ENCODE measurements at regions of chr1 and their contacts with region 1.

Region 1: GRCh38 chr1:86515597-86515996 is 31.3 kb upstream of the CLCA4 start:
- DNase-seq: no peak
- ATAC-seq: no peak
- H3K4me3 ChIP-seq: no peak overlapping the region
- H3K4me3 Mint-ChIP-seq: no peak overlapping the region
- H3K27ac ChIP-seq: no peak overlapping the region
- H3K27ac Mint-ChIP-seq: no peak overlapping the region
- H3K4me1 ChIP-seq: no peaks in the 10 kb centered on the region
- H3K4me1 Mint-ChIP-seq: no peaks in the 10 kb centered on the region
- H3K27me3 ChIP-seq: no peaks in the 10 kb centered on the region
- H3K27me3 Mint-ChIP-seq: no peaks in the 10 kb centered on the region

Region 2: DNA sequence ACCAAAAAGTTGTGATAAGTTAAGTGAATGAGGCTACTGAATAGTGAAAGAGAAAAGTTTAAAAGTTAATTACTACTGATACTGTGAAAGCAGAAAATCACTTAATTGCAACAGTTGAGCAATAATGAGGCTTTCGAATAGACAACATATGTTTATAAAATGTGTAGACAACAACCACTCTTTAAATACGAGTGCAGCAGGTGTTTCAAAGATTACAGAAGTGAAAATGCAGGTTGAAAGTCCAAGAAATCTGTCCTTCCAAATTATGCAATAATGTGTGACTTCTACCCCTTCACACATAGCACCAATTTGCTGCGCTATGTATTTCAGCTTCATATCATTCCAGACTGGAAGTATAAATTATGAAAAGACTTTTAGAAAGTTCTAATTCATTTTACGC is 572.1 kb before region 1 on chr1:
- CTCF ChIA-PET with region 1: no interaction called
- POLR2A ChIA-PET with region 1: no interaction called
- intact Hi-C with region 1: no loop called
- DNase-seq: no peak
- ATAC-seq: no peak
- H3K4me3 ChIP-seq: no peak overlapping the region
- H3K4me3 Mint-ChIP-seq: no peak overlapping the region
- H3K27ac ChIP-seq: no peak overlapping the region
- H3K27ac Mint-ChIP-seq: no peak overlapping the region
- H3K4me1 ChIP-seq: no peaks in the 10 kb centered on the region
- H3K4me1 Mint-ChIP-seq: no peaks in the 10 kb centered on the region
- H3K27me3 ChIP-seq: no peaks in the 10 kb centered on the region
- H3K27me3 Mint-ChIP-seq: no peaks in the 10 kb centered on the region

Region 3: DNA sequence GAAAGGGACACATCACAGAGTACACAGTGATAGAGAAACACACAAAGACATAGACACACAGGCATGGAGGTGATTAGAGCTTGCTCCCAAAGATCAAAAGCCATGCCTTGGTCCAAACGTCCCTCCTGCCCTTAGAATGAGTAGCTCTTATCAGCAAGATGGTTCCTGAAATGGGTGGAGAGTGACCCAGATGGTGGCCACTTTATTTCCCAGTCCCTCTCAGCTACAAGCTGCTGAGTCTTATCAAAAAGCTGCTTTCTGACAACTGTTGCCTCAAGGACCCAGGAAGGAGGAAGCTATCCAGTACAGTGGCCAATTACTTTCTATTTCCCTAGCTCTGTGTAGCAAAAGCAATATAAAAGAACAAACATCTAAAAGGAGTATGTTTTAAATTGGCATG is 54.6 kb before region 1 on chr1:
- CTCF ChIA-PET with region 1: no interaction called
- POLR2A ChIA-PET with region 1: no interaction called
- intact Hi-C with region 1: no loop called
- DNase-seq: no peak
- ATAC-seq: no peak
- H3K4me3 ChIP-seq: no peak overlapping the region
- H3K4me3 Mint-ChIP-seq: no peak overlapping the region
- H3K27ac ChIP-seq: no peak overlapping the region
- H3K27ac Mint-ChIP-seq: no peak overlapping the region
- H3K4me1 ChIP-seq: no peaks in the 10 kb centered on the region
- H3K4me1 Mint-ChIP-seq: no peaks in the 10 kb centered on the region
- H3K27me3 ChIP-seq: no peaks in the 10 kb centered on the region
- H3K27me3 Mint-ChIP-seq: peaks cover 9 to 22% (median 10%) of the 10 kb centered on the region in 5 donors

Region 4: DNA sequence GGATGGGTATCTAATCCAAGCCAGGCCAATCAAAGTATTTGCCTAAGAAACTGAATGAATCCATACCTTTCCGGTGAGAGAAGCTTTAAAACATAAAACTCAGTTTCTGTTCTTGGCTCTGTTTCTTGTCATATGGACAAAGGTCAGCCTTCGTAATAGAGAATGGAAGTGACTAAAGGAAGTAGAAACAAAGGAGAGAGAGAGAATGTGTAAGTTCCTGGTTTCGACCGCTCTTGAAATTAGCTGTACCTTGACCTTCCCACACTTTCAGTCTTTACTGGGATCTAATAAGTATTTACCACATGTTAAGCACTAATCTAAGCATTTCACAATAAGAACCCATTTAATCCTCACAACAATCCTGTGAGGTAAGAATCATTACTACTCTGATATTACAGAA is 11.7 kb after region 1 on chr1:
- CTCF ChIA-PET with region 1: no interaction called
- POLR2A ChIA-PET with region 1: no interaction called
- intact Hi-C with region 1: no loop called
- DNase-seq: no peak
- ATAC-seq: no peak
- H3K4me3 ChIP-seq: no peak overlapping the region
- H3K4me3 Mint-ChIP-seq: no peak overlapping the region
- H3K27ac ChIP-seq: no peak overlapping the region
- H3K27ac Mint-ChIP-seq: no peak overlapping the region
- H3K4me1 ChIP-seq: no peaks in the 10 kb centered on the region
- H3K4me1 Mint-ChIP-seq: no peaks in the 10 kb centered on the region
- H3K27me3 ChIP-seq: no peaks in the 10 kb centered on the region
- H3K27me3 Mint-ChIP-seq: peaks cover 0 to 5% (median 0%) of the 10 kb centered on the region in 5 donors

Region 5: DNA sequence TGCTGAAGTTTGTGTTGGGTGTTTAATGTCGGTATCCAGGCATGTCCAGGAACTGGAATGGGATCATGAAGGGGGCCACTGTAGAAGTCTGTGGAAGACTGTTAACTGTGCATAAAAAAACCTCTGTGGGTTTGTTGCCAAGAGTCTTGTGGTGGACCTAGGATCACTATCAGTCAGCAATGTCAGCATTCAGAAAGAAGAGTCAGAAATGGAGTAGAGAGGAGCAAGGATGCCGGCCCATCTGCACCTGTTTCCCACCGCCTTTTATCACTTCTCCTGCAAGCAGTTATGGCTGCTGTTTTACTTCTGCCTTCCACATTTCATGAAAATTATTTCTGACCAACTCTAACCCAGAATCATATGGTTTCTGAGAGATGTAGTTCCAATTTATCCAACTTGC is 68.0 kb after region 1 on chr1:
- CTCF ChIA-PET with region 1: no interaction called
- POLR2A ChIA-PET with region 1: no interaction called
- intact Hi-C with region 1: no loop called
- DNase-seq: no peak
- ATAC-seq: no peak
- H3K4me3 ChIP-seq: no peak overlapping the region
- H3K4me3 Mint-ChIP-seq: no peak overlapping the region
- H3K27ac ChIP-seq: no peak overlapping the region
- H3K27ac Mint-ChIP-seq: no peak overlapping the region
- H3K4me1 ChIP-seq: no peaks in the 10 kb centered on the region
- H3K4me1 Mint-ChIP-seq: no peaks in the 10 kb centered on the region
- H3K27me3 ChIP-seq: no peaks in the 10 kb centered on the region
- H3K27me3 Mint-ChIP-seq: peaks cover 0 to 9% (median 4%) of the 10 kb centered on the region in 5 donors

Region 6: DNA sequence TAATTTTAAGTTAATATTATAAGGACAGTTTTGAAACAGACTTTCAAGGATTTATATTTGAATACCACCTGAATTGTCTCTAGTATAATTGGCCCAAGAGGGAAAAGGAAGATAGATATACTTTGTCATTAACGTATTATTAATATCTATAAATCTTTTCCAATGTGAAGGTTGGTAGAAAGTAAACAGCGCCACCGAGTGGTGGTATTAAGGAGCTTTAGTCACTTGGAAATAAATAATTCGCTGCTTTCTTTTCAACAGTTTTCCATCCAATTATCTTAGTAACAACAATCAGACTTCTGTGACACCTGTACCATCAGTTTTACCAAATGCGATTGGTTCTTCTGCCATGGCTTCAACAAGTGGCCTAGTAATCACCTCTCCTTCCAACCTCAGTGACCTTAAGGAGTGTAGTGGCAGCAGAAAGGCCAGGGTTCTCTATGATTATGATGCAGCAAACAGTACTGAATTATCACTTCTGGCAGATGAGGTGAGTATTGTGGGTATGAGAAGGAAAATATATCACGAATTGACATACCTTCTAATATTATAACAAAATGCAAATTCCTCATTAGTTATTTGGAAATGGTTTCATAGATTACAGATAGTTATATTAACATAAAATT is 226.5 kb after region 1 on chr1:
- CTCF ChIA-PET with region 1: interaction called, 3 read pairs
- POLR2A ChIA-PET with region 1: no interaction called
- intact Hi-C with region 1: loop called in 1 of 2 experiments (anchors 5 kb)
- DNase-seq: peak in 7 of 9 donors; percentile 12 to 43 (median 26)
- ATAC-seq: no peak
- H3K4me3 ChIP-seq: no peak overlapping the region
- H3K4me3 Mint-ChIP-seq: peak overlapping the region in 1 of 10 donors; percentile 60
- H3K27ac ChIP-seq: no peak overlapping the region
- H3K27ac Mint-ChIP-seq: no peak overlapping the region
- H3K4me1 ChIP-seq: peaks cover 5 to 12% of the 10 kb centered on the region in 2 donors
- H3K4me1 Mint-ChIP-seq: peaks cover 0 to 6% (median 0%) of the 10 kb centered on the region in 7 donors
- H3K27me3 ChIP-seq: no peaks in the 10 kb centered on the region
- H3K27me3 Mint-ChIP-seq: no peaks in the 10 kb centered on the region

Measured in naive thymus-derived CD4-positive, alpha-beta T cell (primary cell).